ENCODE measurements at regions of chr6 and their contacts with region 1.

Region 1: GRCh38 chr6:4775584-4776494 is at the start of gene CDYL:
- DNase-seq: peak; percentile 93
- H3K4me3 ChIP-seq: peak within 1 kb of the TSS; percentile 64 to 79 (median 72)
- H3K27ac ChIP-seq: peak within 1 kb of the TSS; percentile 83 to 88 (median 86)
- H3K4me1 ChIP-seq: peaks cover 0 to 25% (median 20%) of the 10 kb centered on the region in 4 donors
- H3K27me3 ChIP-seq: no peaks in the 10 kb centered on the region
- CTCF ChIP-seq: peak in 1 of 4 experiments; percentile 30
- EP300 ChIP-seq: no peak
- POLR2A ChIP-seq: no peak
- total RNA-seq, gene CDYL: 37.9 to 82.8 (median 56.5) TPM

Region 2: GRCh38 chr6:4135665-4136353 is 640.0 kb before region 1 on chr6:
- intact Hi-C with region 1: loop called (anchors 5 kb)
- DNase-seq: peak; percentile 100
- H3K4me3 ChIP-seq: peak overlapping the region; percentile 66 to 93 (median 80)
- H3K27ac ChIP-seq: peak overlapping the region; percentile 90 to 97 (median 93)
- H3K4me1 ChIP-seq: peaks cover 0 to 24% (median 21%) of the 10 kb centered on the region in 4 donors
- H3K27me3 ChIP-seq: no peaks in the 10 kb centered on the region
- CTCF ChIP-seq: peak in 1 of 4 experiments; percentile 9
- EP300 ChIP-seq: no peak
- POLR2A ChIP-seq: peak in 1 of 2 donors; percentile 22

Region 3: DNA sequence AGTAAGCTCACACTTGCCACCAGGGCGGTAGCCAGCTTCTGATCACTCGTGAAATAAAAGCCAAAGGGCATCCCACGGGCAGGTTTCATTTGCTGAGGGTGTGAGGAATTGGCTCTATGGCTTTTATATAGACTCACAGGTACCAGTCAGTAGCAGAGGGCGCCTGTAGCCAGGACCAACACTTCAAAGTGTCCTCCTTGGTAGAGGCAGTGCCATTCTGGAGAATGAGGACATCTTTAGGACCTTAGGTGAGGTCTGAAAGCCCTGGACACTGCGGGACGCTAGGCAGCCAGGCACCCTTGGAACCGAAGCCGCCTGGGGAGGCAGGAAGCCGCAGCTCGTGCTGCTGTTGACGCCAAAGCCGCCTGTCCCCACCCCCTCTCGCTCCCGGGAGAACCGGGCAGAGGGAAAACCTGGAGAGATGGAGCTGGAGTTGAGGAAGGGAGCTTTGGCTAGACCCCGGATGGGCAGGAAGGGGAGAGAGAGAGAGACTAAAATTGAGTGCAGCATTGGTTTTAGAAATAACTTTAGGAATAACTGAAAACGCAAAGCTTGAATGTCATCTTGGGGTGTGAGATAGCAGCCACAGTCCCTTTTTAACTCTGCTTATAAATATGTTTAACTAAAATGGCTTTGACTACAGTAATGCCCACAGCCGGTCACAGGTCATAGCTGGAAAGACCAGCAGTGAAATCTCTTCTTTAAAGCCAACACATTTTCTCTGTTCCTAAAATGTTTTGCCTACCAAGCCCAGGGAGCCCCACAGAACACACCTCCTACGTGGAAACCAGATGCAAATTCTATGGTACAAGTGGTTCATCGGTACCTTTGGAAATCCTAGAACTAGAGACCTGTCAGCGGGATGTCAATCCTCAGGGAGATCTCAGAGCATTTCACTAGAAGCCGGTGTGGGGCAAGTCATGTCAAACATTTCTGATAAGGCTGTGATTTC is 128.1 kb before region 1 on chr6:
- intact Hi-C with region 1: loop called (anchors 1 kb)
- DNase-seq: peak; percentile 93
- H3K4me3 ChIP-seq: peak overlapping the region; percentile 22 to 50 (median 40)
- H3K27ac ChIP-seq: peak overlapping the region in 3 of 4 donors; percentile 64 to 69 (median 65)
- H3K4me1 ChIP-seq: peaks cover 0 to 11% (median 5%) of the 10 kb centered on the region in 4 donors
- H3K27me3 ChIP-seq: no peaks in the 10 kb centered on the region
- CTCF ChIP-seq: no peak
- EP300 ChIP-seq: peak in 2 of 4 donors; percentile 50 to 84
- POLR2A ChIP-seq: peak in 1 of 2 donors; percentile 13

Region 4: GRCh38 chr6:4732691-4733315 is 43.0 kb before region 1 on chr6:
- intact Hi-C with region 1: no loop called
- DNase-seq: peak; percentile 85
- H3K4me3 ChIP-seq: peak overlapping the region in 3 of 4 donors; percentile 16 to 26 (median 21)
- H3K27ac ChIP-seq: peak overlapping the region in 1 of 4 donors; percentile 27
- H3K4me1 ChIP-seq: peaks cover 0 to 7% (median 6%) of the 10 kb centered on the region in 4 donors
- H3K27me3 ChIP-seq: no peaks in the 10 kb centered on the region
- CTCF ChIP-seq: no peak
- EP300 ChIP-seq: no peak
- POLR2A ChIP-seq: no peak

Region 5: DNA sequence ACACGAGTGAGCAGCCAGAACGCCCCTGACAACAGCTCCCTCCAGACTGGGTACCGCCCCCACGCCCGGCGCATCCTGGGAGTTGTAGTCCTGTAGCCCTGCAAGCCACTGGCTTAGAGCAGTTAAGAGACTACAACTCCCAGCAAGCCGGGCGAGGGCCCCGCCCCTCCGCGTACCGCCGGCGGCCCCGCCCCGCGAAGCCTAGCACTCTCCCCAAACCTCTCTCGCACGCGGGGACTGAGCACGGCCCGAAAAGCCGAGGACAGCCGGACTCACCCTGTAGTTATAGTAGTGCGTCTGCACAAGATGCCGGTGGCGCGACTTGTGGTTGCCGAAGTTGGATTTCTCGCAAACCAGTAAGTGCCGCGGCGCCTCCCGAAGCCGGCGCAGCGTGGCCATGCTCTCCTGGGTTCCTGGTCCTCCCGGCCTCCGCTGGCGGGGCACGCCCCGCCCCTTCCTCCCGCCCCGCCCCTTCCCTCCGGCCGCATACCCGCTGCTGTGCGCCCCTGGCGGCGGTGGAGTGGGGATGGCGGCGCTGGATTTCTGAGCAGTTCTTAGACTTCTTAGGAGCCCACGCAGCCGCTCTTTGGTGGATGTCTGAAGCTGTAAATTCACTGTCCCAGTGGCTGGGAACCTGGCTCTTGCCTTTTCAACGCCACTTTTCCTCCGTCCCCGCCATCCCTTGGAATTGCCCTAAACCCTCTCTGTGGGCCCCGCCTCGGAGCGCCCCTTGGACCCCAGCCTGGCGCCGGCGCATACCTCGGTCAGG is 227.9 kb after region 1 on chr6 and contains the start of gene RPP40:
- intact Hi-C with region 1: loop called (anchors 2 kb)
- DNase-seq: peak; percentile 98
- H3K4me3 ChIP-seq: peak within 1 kb of the TSS; percentile 47 to 67 (median 58)
- H3K27ac ChIP-seq: peak within 1 kb of the TSS; percentile 89 to 96 (median 91)
- H3K4me1 ChIP-seq: peaks cover 0 to 8% (median 7%) of the 10 kb centered on the region in 4 donors
- H3K27me3 ChIP-seq: no peaks in the 10 kb centered on the region
- CTCF ChIP-seq: peak; percentile 56 to 94 (median 90)
- EP300 ChIP-seq: no peak
- POLR2A ChIP-seq: no peak
- total RNA-seq, gene RPP40: 4.2 to 9.7 (median 7.2) TPM

Region 6: GRCh38 chr6:5085193-5085647 is 309.4 kb after region 1 on chr6 and contains the start of gene PPP1R3G:
- intact Hi-C with region 1: loop called (anchors 5 kb)
- DNase-seq: peak; percentile 82
- H3K4me3 ChIP-seq: peak within 1 kb of the TSS; percentile 51 to 73 (median 64)
- H3K27ac ChIP-seq: peak within 1 kb of the TSS; percentile 73 to 86 (median 83)
- H3K4me1 ChIP-seq: peaks cover 0 to 25% (median 16%) of the 10 kb centered on the region in 4 donors
- H3K27me3 ChIP-seq: no peaks in the 10 kb centered on the region
- CTCF ChIP-seq: no peak
- EP300 ChIP-seq: no peak
- POLR2A ChIP-seq: no peak
- total RNA-seq, gene PPP1R3G: 1.8 to 3.0 (median 2.2) TPM

Measured in sigmoid colon (tissue), 7 donors.